Natural killer cell (primary cell): ENCODE measurements at regions of chr2 and their contacts with region 1.

Region 1: GRCh38 chr2:225660262-225661131 is 261.0 kb downstream of the NYAP2 start:
- DNase-seq: peak; percentile 43 to 84
- ATAC-seq: peak; percentile 59 to 73 (median 62)
- H3K4me3 ChIP-seq: no peak overlapping the region
- H3K4me3 Mint-ChIP-seq: no peak overlapping the region
- H3K27ac ChIP-seq: no peak overlapping the region
- H3K27ac Mint-ChIP-seq: no peak overlapping the region
- H3K4me1 ChIP-seq: no peaks in the 10 kb centered on the region
- H3K4me1 Mint-ChIP-seq: no peaks in the 10 kb centered on the region
- H3K27me3 ChIP-seq: no peaks in the 10 kb centered on the region
- H3K27me3 Mint-ChIP-seq: peaks cover 8 to 12% of the 10 kb centered on the region in 2 donors
- CTCF ChIP-seq: peak; percentile 76

Region 2: GRCh38 chr2:224357098-224357901 is 1303.2 kb before region 1 on chr2:
- intact Hi-C with region 1: loop called (anchors 5 kb)
- DNase-seq: peak in 1 of 2 donors; percentile 82
- ATAC-seq: peak; percentile 76 to 82 (median 76)
- H3K4me3 ChIP-seq: no peak overlapping the region
- H3K4me3 Mint-ChIP-seq: no peak overlapping the region
- H3K27ac ChIP-seq: no peak overlapping the region
- H3K27ac Mint-ChIP-seq: no peak overlapping the region
- H3K4me1 ChIP-seq: no peaks in the 10 kb centered on the region
- H3K4me1 Mint-ChIP-seq: no peaks in the 10 kb centered on the region
- H3K27me3 ChIP-seq: no peaks in the 10 kb centered on the region
- H3K27me3 Mint-ChIP-seq: peaks cover 5 to 11% of the 10 kb centered on the region in 2 donors
- CTCF ChIP-seq: peak; percentile 88

Region 3: DNA sequence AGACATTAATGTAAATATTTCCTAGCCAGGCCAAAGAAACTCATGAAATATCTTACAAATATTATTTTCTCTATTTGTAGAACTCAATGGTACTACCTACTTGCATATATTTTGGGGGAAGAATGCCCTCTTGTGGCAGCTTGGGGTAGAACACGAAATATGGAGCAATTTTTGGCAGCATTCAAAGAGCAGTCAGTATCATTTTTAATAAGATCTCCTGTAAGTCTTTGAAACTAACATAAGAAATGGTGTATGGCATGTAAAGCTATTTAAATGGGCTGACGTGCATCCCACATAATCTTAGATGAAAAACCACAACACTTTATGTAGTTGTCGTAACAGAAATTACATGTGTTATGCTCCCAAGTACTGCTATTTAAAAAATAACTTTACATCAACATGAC is 882.0 kb before region 1 on chr2:
- intact Hi-C with region 1: loop called (anchors 5 kb)
- DNase-seq: peak; percentile 31 to 77
- ATAC-seq: peak in 2 of 3 donors; percentile 69 to 74
- H3K4me3 ChIP-seq: no peak overlapping the region
- H3K4me3 Mint-ChIP-seq: no peak overlapping the region
- H3K27ac ChIP-seq: no peak overlapping the region
- H3K27ac Mint-ChIP-seq: peak overlapping the region in 1 of 2 donors; percentile 59
- H3K4me1 ChIP-seq: no peaks in the 10 kb centered on the region
- H3K4me1 Mint-ChIP-seq: peaks cover 0 to 13% of the 10 kb centered on the region in 2 donors
- H3K27me3 ChIP-seq: no peaks in the 10 kb centered on the region
- H3K27me3 Mint-ChIP-seq: no peaks in the 10 kb centered on the region
- CTCF ChIP-seq: peak; percentile 95

Region 4: DNA sequence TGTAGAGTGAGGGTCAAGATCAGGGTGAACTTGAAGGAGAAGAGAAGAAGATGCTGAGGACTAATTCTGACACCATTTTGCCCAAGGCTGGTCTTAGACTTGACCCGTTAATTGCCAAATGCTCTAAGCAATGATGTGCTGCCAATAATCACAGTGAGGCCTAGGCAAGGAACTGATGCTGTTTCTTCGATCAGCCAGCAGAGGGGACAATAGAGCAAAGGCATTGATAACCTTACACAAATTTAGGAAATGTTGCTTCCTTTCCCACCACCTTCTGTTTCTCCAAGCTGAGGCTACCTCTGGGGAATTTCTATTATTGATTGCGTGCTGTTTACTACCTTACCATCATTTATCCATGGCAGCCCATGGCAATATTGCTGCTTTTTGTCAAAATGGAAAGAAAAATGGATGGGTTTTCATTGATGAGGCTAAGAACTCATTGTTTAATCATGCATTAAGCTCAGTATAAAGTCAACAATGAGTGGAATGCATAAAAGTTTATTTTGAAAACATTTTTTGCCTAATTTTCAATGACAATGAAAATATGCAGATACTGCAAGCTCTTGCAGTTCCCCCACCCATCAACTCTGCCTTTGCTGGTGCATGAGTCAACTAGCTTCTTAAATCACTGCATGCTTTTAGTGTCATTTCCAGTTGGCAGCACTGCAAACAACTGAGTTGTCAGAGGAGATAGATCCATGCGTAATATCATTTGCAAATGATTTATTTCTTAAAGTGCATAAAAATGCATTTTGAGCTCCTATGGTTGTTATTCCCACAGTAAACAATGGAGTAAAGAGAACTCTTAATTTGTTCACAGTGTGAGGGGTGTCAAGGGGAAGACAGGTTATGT is 377.4 kb before region 1 on chr2:
- intact Hi-C with region 1: loop called (anchors 1 kb)
- DNase-seq: peak in 1 of 2 donors; percentile 60
- ATAC-seq: peak in 1 of 3 donors; percentile 55
- H3K4me3 ChIP-seq: no peak overlapping the region
- H3K4me3 Mint-ChIP-seq: no peak overlapping the region
- H3K27ac ChIP-seq: no peak overlapping the region
- H3K27ac Mint-ChIP-seq: no peak overlapping the region
- H3K4me1 ChIP-seq: no peaks in the 10 kb centered on the region
- H3K4me1 Mint-ChIP-seq: no peaks in the 10 kb centered on the region
- H3K27me3 ChIP-seq: no peaks in the 10 kb centered on the region
- H3K27me3 Mint-ChIP-seq: peaks cover 0 to 11% of the 10 kb centered on the region in 2 donors
- CTCF ChIP-seq: peak; percentile 60

Region 5: DNA sequence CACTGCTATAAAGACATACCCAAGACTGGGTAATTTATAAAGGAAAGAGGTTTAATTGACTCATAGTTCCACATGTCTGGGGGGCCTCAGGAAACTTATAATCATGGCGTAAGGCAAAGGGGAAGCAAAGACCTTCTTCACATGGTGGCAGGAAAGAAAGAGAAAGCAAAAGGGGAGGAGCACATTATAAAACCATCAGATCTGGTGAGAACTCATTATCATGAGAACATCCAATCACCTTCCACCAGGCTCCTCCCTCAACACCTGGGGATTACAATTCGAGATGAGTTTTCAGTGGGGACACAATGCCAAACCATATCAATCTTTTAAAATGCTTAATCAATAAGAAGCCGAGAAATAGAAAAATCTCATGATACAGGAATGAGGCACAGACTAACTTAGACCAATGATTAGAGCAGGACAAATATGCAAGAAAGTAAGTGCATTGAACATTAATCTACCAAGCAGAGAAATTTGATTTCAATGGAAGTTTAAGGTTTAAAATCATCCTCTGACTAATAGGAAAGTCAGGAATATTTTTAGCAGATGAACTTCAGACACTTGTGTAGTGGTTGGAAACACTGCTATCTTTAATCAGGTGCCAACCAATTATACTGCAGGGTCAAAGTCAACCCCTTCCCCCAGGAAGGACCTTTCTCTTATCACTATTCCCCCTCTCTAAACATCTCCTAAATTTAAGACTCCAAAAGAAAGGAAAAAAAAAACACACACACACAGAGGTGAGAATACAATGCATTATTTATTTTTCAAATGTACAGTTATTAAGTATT is 879.9 kb after region 1 on chr2:
- intact Hi-C with region 1: no loop called
- DNase-seq: no peak
- ATAC-seq: no peak
- H3K4me3 ChIP-seq: no peak overlapping the region
- H3K4me3 Mint-ChIP-seq: no peak overlapping the region
- H3K27ac ChIP-seq: no peak overlapping the region
- H3K27ac Mint-ChIP-seq: no peak overlapping the region
- H3K4me1 ChIP-seq: no peaks in the 10 kb centered on the region
- H3K4me1 Mint-ChIP-seq: no peaks in the 10 kb centered on the region
- H3K27me3 ChIP-seq: no peaks in the 10 kb centered on the region
- H3K27me3 Mint-ChIP-seq: no peaks in the 10 kb centered on the region
- CTCF ChIP-seq: no peak

Region 6: DNA sequence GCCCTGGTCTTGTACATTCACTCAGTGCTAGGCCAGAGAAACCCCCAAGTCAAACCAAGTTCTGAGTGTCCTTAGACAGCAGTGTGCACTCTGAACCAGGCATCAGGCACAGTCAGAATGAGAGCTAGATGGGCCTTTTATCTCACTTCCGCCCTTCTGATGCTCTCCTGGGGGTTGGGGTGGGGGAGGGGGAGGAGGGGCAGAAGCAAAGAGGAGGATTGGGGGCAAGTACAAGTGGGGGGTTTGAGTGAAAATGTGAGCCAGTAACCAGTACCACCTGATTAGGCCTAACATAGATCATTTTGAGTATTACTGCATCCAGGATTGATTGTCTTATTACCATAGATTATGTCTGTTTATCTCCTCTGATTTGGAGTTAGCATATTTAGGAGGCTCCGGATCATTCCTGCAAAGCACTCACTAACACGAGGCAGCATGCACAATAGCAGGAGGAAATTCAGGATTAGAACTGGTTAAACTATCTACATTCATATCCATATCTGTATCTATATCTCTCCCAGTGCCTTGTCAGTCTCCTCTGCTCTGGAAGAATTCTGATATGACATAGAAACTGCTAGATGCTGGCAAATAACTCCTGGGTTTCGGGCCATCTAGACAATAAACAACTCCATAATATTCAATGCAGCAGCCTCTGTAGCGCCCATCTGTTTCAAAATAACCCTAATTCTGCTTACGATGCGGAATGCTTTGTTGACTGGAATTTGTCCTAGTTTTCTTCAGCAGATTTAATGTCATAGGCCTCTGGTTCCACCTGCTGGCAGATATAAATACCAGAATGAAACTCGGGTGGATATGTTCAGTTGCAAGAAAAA is 1324.5 kb after region 1 on chr2:
- intact Hi-C with region 1: loop called (anchors 10 kb)
- DNase-seq: peak in 1 of 2 donors; percentile 61
- ATAC-seq: no peak
- H3K4me3 ChIP-seq: no peak overlapping the region
- H3K4me3 Mint-ChIP-seq: no peak overlapping the region
- H3K27ac ChIP-seq: no peak overlapping the region
- H3K27ac Mint-ChIP-seq: no peak overlapping the region
- H3K4me1 ChIP-seq: no peaks in the 10 kb centered on the region
- H3K4me1 Mint-ChIP-seq: peaks cover 5 to 11% of the 10 kb centered on the region in 2 donors
- H3K27me3 ChIP-seq: no peaks in the 10 kb centered on the region
- H3K27me3 Mint-ChIP-seq: no peaks in the 10 kb centered on the region
- CTCF ChIP-seq: no peak